ENCODE measurements at regions of chr5 and their contacts with region 1.

Region 1: DNA sequence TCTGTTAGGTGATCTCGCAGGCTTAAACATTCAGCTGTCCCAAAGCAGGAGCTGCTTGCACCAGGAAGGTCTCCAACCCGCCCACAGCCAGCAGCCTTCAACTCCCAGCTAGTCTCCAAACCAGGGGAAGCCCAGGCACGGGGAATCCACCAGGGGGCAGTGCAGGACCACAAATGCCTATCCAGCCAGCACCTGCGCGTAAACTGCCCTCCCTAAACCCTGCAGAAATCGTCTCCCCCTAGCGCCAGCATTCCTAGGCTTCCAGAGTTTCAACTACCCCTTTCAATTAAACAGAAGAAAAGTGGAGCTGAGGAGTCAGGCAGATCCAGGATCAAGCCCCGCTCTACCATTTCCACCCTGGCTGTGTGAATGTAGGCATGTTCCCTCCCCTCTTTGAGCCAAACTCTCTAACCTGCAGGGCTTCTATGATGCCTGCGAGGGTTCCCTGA is 72.0 kb downstream of the HRH2 start:
- DNase-seq: peak; percentile 74
- ATAC-seq: peak; percentile 71
- H3K4me3 Mint-ChIP-seq: no peak overlapping the region
- H3K27ac Mint-ChIP-seq: no peak overlapping the region
- H3K4me1 Mint-ChIP-seq: peaks cover 5% of the 10 kb centered on the region
- H3K27me3 Mint-ChIP-seq: peaks cover 46% of the 10 kb centered on the region
- CTCF ChIP-seq: no peak

Region 2: GRCh38 chr5:175902026-175902425 is 172.2 kb after region 1 on chr5:
- CTCF ChIA-PET with region 1: no interaction called
- POLR2A ChIA-PET with region 1: no interaction called
- intact Hi-C with region 1: loop called (anchors 5 kb)
- DNase-seq: no peak
- ATAC-seq: no peak
- H3K4me3 Mint-ChIP-seq: no peak overlapping the region
- H3K27ac Mint-ChIP-seq: no peak overlapping the region
- H3K4me1 Mint-ChIP-seq: no peaks in the 10 kb centered on the region
- H3K27me3 Mint-ChIP-seq: peaks cover 1% of the 10 kb centered on the region
- CTCF ChIP-seq: no peak

Region 3: GRCh38 chr5:176959051-176959450 is 1229.2 kb after region 1 on chr5:
- CTCF ChIA-PET with region 1: no interaction called
- POLR2A ChIA-PET with region 1: no interaction called
- intact Hi-C with region 1: loop called (anchors 5 kb)
- DNase-seq: no peak
- ATAC-seq: peak; percentile 28
- H3K4me3 Mint-ChIP-seq: no peak overlapping the region
- H3K27ac Mint-ChIP-seq: no peak overlapping the region
- H3K4me1 Mint-ChIP-seq: no peaks in the 10 kb centered on the region
- H3K27me3 Mint-ChIP-seq: no peaks in the 10 kb centered on the region
- CTCF ChIP-seq: no peak